Activated naive CD4-positive, alpha-beta T cell treated with anti-CD3 and anti-CD28 coated beads for 36 hours (primary cell): ENCODE measurements at regions of chr5 and their contacts with region 1.

Region 1: DNA sequence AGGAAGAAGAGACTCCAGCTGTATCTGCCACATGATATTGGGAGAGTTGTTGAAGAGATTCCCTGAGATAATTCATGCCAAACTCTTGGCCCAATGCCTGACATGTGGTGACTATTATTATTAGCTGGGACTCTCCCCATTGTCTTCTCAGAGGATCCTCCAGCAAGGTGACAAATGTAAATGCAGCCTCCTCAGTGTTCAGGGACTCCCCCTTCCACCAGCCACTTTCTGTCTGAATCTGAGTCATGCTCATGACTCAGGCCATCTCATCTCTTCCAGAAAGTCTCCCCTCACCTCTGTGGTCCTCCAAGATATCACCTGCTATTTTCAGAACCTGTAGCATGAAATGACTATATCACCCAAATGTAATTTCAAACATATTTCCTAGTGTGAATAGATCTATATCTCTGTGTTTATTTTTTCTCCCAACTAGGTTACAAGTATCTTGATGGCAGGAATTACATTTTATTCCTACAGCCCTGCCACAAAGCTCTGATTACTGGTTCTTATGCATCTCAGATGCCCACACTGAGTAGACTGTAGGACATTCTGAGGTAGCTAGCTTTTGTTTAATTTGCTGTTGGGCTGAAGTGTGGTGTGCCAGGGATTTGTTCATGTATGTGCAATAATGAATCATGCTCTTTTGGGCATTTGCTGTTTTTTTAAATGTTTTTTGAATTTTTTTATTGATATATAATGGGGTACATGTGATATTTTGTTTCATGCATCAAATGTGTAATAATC is 126.6 kb upstream of the IL12B start:
- DNase-seq: peak; percentile 88
- H3K4me3 Mint-ChIP-seq: no peak overlapping the region
- H3K27ac Mint-ChIP-seq: no peak overlapping the region
- H3K4me1 Mint-ChIP-seq: peaks cover 50% of the 10 kb centered on the region
- H3K27me3 Mint-ChIP-seq: peaks cover 14% of the 10 kb centered on the region

Region 2: GRCh38 chr5:157731272-157732129 is 1725.4 kb before region 1 on chr5 and contains the start of gene THG1L:
- CTCF ChIA-PET with region 1: no interaction called
- intact Hi-C with region 1: loop called (anchors 2 kb)
- DNase-seq: peak; percentile 100
- H3K4me3 Mint-ChIP-seq: peak within 1 kb of the TSS; percentile 97
- H3K27ac Mint-ChIP-seq: peak within 1 kb of the TSS; percentile 95
- H3K4me1 Mint-ChIP-seq: peaks cover 25% of the 10 kb centered on the region
- H3K27me3 Mint-ChIP-seq: no peaks in the 10 kb centered on the region
- total RNA-seq, gene THG1L: 28.1 to 30.2 TPM

Region 3: GRCh38 chr5:158819840-158820620 is 636.9 kb before region 1 on chr5:
- CTCF ChIA-PET with region 1: no interaction called
- intact Hi-C with region 1: loop called (anchors 1 kb)
- DNase-seq: peak; percentile 42
- H3K4me3 Mint-ChIP-seq: no peak overlapping the region
- H3K27ac Mint-ChIP-seq: no peak overlapping the region
- H3K4me1 Mint-ChIP-seq: peaks cover 28% of the 10 kb centered on the region
- H3K27me3 Mint-ChIP-seq: peaks cover 2% of the 10 kb centered on the region

Region 4: DNA sequence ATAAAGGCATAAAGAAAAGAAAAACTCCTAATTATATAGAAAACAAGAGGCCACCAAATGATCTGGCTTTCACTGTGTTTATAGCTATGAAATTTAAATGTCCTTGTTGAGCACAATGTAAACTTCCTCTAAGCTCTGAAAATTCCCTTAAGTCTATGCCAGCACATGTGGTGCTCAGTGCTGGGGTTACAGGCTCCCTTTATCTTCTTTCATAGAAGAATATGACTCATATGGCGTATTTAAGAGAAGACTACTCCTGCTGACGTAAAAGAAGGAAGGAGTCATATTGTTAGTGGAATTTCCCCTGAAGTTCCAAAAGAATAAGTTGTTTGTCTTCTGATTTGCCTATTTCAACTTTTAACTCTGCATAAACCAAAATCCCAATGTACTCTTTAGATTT is 277.9 kb before region 1 on chr5:
- CTCF ChIA-PET with region 1: no interaction called
- intact Hi-C with region 1: loop called (anchors 1 kb)
- DNase-seq: peak; percentile 63
- H3K4me3 Mint-ChIP-seq: no peak overlapping the region
- H3K27ac Mint-ChIP-seq: peak overlapping the region; percentile 96
- H3K4me1 Mint-ChIP-seq: peaks cover 78% of the 10 kb centered on the region
- H3K27me3 Mint-ChIP-seq: no peaks in the 10 kb centered on the region

Region 5: GRCh38 chr5:159412284-159413046 is 44.4 kb before region 1 on chr5:
- CTCF ChIA-PET with region 1: interaction called, 47 read pairs
- intact Hi-C with region 1: loop called (anchors 1 kb)
- DNase-seq: peak; percentile 86
- H3K4me3 Mint-ChIP-seq: no peak overlapping the region
- H3K27ac Mint-ChIP-seq: peak overlapping the region; percentile 37
- H3K4me1 Mint-ChIP-seq: peaks cover 54% of the 10 kb centered on the region
- H3K27me3 Mint-ChIP-seq: peaks cover 3% of the 10 kb centered on the region

Region 6: DNA sequence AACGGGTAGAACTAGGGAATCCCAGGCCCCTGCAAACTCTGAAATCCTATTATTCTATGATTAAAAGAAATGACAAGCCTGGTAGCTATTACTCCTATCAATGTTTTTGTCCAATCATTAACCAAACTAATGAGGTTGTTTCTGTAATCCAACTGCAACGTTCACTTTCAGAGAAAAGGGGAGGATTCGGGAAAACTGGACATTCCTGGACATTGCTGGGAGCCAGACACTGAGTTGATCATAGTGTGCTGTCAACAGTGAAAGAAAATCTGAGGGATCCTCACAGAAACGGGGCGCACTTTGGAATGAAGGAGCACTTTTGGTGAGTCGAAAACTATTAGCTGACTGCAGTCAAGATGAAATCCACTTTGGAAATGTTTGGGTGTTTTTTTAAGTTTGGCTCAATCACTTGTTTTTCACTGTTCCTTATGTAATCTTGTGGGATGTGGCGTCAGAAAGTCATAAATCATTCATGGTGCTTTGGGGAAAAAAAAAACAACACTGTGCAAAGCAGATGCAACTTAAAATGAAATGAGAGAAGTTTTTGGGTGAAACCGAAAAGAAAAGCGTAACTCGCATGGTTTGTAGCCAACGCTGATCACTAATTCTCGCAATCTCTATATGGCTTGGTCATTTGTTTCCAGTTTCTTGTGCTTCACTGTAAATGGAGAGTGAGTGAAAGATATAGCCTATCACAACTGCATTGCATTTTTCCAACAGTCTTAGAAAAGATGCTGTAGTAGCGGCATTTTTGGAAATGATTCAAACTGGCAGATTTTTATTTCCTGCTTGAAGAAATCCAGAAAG is 408.2 kb after region 1 on chr5:
- CTCF ChIA-PET with region 1: no interaction called
- intact Hi-C with region 1: loop called (anchors 1 kb)
- DNase-seq: no peak
- H3K4me3 Mint-ChIP-seq: no peak overlapping the region
- H3K27ac Mint-ChIP-seq: no peak overlapping the region
- H3K4me1 Mint-ChIP-seq: peaks cover 5% of the 10 kb centered on the region
- H3K27me3 Mint-ChIP-seq: peaks cover 43% of the 10 kb centered on the region